Activated CD4-positive, alpha-beta T cell treated with anti-CD3 and anti-CD28 coated beads for 36 hours (primary cell): ENCODE measurements at regions of chr10 and their contacts with region 1.

Region 1: DNA sequence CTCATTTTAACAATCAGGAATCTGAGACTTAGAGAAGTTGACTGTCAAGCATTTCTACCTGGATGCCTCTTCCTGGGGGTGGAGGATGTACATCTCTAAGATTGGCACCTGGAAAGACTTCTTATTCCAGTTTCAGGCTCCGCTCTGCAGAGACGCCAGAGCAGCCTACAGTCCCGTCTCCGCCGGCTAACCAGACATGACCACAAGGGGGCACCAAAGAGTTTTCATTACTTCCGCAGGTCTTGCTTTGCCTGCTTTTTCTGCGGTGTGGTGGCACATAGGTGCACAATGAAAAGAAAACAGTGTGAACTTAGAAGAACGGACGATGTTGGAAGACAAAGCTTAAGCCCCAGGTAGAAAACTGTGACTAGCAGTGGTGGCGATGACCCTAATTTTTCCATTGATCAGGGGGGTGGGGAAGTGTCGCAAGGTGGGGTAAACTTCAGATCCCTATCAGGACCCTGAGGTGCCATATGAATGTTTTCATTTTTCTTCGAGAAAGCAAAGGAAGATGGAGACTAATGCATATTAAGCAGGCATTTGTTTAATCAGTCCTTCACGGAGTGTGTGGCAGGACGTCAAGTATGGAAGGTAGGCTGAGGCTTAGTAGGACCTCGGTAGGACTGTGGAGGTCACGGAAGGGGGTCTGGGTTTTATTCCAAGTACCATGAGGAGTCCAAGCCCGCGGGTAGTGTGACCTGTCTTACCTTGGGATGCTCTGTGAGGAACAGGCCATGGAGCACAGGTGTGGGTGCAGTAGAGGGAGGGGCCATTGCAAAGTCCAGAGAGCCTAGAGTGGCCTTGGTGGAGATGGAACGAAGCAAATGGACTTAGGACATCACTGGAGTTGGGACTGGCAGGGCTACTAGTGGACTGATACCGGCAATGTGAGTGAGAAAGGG is 60.1 kb upstream of the SORCS3 start:
- DNase-seq: peak; percentile 84
- ATAC-seq: peak; percentile 87
- H3K4me3 Mint-ChIP-seq: no peak overlapping the region
- H3K27ac Mint-ChIP-seq: no peak overlapping the region
- H3K4me1 Mint-ChIP-seq: peaks cover 8% of the 10 kb centered on the region
- H3K27me3 Mint-ChIP-seq: peaks cover 7% of the 10 kb centered on the region

Region 2: GRCh38 chr10:103839872-103840746 is 740.9 kb before region 1 on chr10:
- CTCF ChIA-PET with region 1: no interaction called
- POLR2A ChIA-PET with region 1: no interaction called
- intact Hi-C with region 1: loop called in 1 of 2 experiments (anchors 5 kb)
- DNase-seq: no peak
- ATAC-seq: no peak
- H3K4me3 Mint-ChIP-seq: no peak overlapping the region
- H3K27ac Mint-ChIP-seq: no peak overlapping the region
- H3K4me1 Mint-ChIP-seq: no peaks in the 10 kb centered on the region
- H3K27me3 Mint-ChIP-seq: no peaks in the 10 kb centered on the region

Region 3: GRCh38 chr10:104614245-104614831 is 33.3 kb after region 1 on chr10:
- CTCF ChIA-PET with region 1: interaction called, 15 read pairs
- POLR2A ChIA-PET with region 1: no interaction called
- intact Hi-C with region 1: loop called (anchors 1 kb)
- DNase-seq: peak; percentile 65
- ATAC-seq: peak; percentile 66
- H3K4me3 Mint-ChIP-seq: no peak overlapping the region
- H3K27ac Mint-ChIP-seq: no peak overlapping the region
- H3K4me1 Mint-ChIP-seq: no peaks in the 10 kb centered on the region
- H3K27me3 Mint-ChIP-seq: peaks cover 5% of the 10 kb centered on the region

Region 4: DNA sequence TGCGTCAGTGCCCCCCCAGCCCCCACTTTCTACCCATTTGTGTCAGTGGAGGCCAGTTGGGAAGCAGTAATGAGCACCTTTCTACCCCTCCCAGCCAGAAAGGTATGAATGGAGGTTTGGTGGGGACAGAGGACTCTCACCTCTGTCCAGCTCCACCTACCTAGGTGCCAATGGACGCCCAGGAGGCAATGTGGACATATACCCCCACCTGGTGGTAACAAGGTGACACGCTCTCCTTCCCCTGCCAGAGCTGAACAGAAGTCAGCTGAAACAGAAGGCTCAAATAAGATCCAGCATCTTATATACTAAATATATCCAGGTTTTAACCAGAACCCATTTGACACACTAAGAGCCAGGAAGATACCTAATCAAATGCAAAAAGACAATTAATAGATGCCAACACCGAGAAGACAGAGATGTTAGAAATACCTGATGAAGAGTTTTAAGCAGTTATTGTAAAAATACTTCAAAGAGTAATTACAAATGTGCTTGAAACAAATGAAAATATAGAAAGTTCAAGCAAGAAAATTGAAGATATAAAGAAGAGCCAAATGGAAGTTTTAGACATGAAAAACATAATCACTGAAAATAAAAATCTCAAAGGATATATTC is 41.7 kb after region 1 on chr10:
- CTCF ChIA-PET with region 1: interaction called, 6 read pairs
- POLR2A ChIA-PET with region 1: no interaction called
- intact Hi-C with region 1: loop called in 1 of 2 experiments (anchors 2 kb)
- DNase-seq: peak; percentile 44
- ATAC-seq: no peak
- H3K4me3 Mint-ChIP-seq: no peak overlapping the region
- H3K27ac Mint-ChIP-seq: no peak overlapping the region
- H3K4me1 Mint-ChIP-seq: no peaks in the 10 kb centered on the region
- H3K27me3 Mint-ChIP-seq: peaks cover 24% of the 10 kb centered on the region

Region 5: DNA sequence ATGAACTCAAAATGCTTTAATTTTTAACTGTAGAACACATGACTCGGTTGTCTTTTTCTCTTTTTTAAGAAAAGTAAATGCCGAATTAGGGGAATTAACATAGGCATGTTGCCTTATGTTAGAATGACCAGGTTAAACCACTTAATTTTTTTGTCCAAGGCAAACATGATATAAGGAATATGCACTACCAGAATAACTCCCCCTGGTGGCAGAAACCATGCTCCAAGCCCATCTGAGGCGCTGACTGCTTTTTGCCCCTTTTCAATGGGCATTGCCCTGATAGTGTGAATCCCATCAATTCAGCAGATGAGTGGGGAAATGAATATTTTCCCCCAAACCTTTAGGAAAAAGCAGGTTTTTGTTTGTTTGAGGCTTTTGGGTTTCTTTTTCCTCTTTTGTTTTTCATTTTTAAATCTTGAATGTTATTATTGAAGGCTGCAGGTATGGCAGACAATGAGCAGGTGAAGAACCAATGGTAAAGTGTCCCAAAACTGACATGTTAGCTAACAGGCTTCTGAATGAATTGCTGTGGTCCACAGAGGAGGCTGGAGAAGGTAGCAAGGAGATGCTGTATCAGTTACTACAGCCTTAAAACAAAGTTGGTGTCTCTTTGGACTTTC is 344.3 kb after region 1 on chr10:
- CTCF ChIA-PET with region 1: interaction called, 3 read pairs
- POLR2A ChIA-PET with region 1: no interaction called
- intact Hi-C with region 1: loop called in 1 of 2 experiments (anchors 2 kb)
- DNase-seq: peak; percentile 58
- ATAC-seq: no peak
- H3K4me3 Mint-ChIP-seq: no peak overlapping the region
- H3K27ac Mint-ChIP-seq: no peak overlapping the region
- H3K4me1 Mint-ChIP-seq: no peaks in the 10 kb centered on the region
- H3K27me3 Mint-ChIP-seq: no peaks in the 10 kb centered on the region

Region 6: DNA sequence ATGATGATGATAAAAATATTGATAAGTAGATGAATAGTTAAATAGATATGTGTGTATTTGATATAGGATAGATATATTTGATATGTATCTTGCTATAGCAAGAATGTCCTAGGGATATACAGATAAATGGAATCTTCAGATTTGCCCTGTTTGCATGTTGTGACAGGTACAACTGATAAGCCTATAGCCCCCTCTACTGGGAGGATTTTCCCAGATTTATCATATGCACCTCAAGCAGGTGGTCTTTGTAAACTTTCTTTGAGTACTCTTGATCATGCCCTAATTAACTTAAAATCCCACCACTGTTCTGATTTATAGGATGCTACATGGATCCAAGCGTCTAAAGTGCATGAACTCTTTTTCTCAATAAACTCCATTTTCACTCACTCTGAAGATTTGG is 1110.8 kb after region 1 on chr10:
- CTCF ChIA-PET with region 1: no interaction called
- POLR2A ChIA-PET with region 1: no interaction called
- intact Hi-C with region 1: loop called in 1 of 2 experiments (anchors 10 kb)
- DNase-seq: no peak
- ATAC-seq: no peak
- H3K4me3 Mint-ChIP-seq: no peak overlapping the region
- H3K27ac Mint-ChIP-seq: no peak overlapping the region
- H3K4me1 Mint-ChIP-seq: no peaks in the 10 kb centered on the region
- H3K27me3 Mint-ChIP-seq: no peaks in the 10 kb centered on the region

Region 7: GRCh38 chr10:106175760-106176377 is 1594.8 kb after region 1 on chr10:
- CTCF ChIA-PET with region 1: no interaction called
- POLR2A ChIA-PET with region 1: no interaction called
- intact Hi-C with region 1: loop called in 1 of 2 experiments (anchors 10 kb)
- DNase-seq: no peak
- ATAC-seq: no peak
- H3K4me3 Mint-ChIP-seq: no peak overlapping the region
- H3K27ac Mint-ChIP-seq: no peak overlapping the region
- H3K4me1 Mint-ChIP-seq: no peaks in the 10 kb centered on the region
- H3K27me3 Mint-ChIP-seq: no peaks in the 10 kb centered on the region